ENCODE measurements at regions of chr5 and their contacts with region 1.

Region 1: DNA sequence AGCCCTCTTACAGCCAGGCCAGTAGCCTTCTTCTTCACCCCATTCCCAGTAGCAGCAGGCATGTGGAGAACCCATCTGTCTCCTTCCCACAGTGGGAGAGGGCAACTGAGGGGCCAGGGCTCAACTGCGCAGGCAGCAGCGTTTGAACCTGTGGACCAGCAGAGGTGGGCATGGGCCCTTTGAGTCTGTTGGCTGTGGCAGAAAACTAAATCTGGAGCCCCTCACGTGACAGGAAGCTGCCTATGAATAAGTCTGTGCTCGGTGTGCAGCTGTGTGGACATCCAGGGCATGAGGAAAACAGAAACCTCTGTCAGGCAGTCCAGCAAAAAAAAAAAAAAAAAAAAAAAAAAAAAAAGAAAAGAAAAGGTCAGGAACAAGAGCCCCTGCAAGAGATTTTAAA is 189.2 kb upstream of the NR3C1 start:
- DNase-seq: no peak
- H3K4me3 Mint-ChIP-seq: no peak overlapping the region
- H3K27ac Mint-ChIP-seq: no peak overlapping the region
- H3K4me1 Mint-ChIP-seq: peaks cover 59% of the 10 kb centered on the region
- H3K27me3 Mint-ChIP-seq: no peaks in the 10 kb centered on the region
- CTCF ChIP-seq: no peak

Region 2: GRCh38 chr5:143629871-143630659 is 37.4 kb after region 1 on chr5:
- CTCF ChIA-PET with region 1: no interaction called
- intact Hi-C with region 1: loop called (anchors 2 kb)
- DNase-seq: peak; percentile 31
- H3K4me3 Mint-ChIP-seq: peak overlapping the region; percentile 20
- H3K27ac Mint-ChIP-seq: peak overlapping the region; percentile 96
- H3K4me1 Mint-ChIP-seq: peaks cover 73% of the 10 kb centered on the region
- H3K27me3 Mint-ChIP-seq: no peaks in the 10 kb centered on the region
- CTCF ChIP-seq: no peak

Region 3: GRCh38 chr5:143659718-143660152 is 67.1 kb after region 1 on chr5:
- CTCF ChIA-PET with region 1: no interaction called
- intact Hi-C with region 1: loop called (anchors 5 kb)
- DNase-seq: no peak
- H3K4me3 Mint-ChIP-seq: peak overlapping the region; percentile 50
- H3K27ac Mint-ChIP-seq: peak overlapping the region; percentile 90
- H3K4me1 Mint-ChIP-seq: peaks cover 51% of the 10 kb centered on the region
- H3K27me3 Mint-ChIP-seq: no peaks in the 10 kb centered on the region
- CTCF ChIP-seq: no peak

Measured in Calu3 (cell line).